ENCODE measurements at regions of chr2 and their contacts with region 1.

Region 1: DNA sequence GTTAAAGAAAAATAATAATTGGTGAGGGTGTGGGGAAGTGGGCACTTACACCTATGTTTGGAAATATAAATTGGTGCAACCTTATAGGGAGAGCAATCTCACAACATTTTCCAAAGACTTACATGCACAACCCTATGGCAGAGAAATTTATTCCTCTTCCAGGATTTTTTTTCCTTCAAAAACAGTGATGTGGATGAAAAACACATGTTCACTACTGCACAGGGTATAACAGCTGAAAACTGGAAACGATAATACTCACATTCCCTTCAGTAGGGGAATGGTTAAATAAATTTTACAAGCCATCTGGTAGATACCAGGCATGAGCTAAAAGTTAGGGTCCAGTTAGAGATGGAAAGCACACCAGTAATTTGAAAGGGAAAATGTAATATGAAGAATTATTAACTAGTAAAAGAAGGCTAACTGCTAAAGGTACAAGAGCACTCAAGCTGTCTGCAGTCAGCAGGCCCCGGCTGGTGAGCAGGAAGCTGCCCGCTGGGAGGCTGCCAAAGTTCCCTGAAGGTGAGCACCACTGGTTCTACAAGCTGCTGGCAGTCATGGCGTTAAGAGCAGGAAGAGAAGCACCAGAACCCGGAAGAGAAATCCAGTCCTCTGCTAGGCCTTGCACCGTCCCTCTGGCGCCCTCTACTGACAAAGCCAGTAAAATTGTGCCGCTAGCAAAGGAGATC is 28.4 kb upstream of the CASP8 start:
- DNase-seq: peak; percentile 77 to 96 (median 92)
- ATAC-seq: peak; percentile 46
- H3K4me3 ChIP-seq: peak overlapping the region in 1 of 2 experiments; percentile 4
- H3K4me3 Mint-ChIP-seq: peak overlapping the region; percentile 58
- H3K27ac ChIP-seq: peak overlapping the region in 1 of 2 experiments; percentile 47
- H3K27ac Mint-ChIP-seq: peak overlapping the region; percentile 89
- H3K4me1 ChIP-seq: peaks cover 40% of the 10 kb centered on the region
- H3K4me1 Mint-ChIP-seq: peaks cover 60% of the 10 kb centered on the region
- H3K27me3 ChIP-seq: no peaks in the 10 kb centered on the region
- H3K27me3 Mint-ChIP-seq: no peaks in the 10 kb centered on the region
- CTCF ChIP-seq: peak; percentile 91

Region 2: DNA sequence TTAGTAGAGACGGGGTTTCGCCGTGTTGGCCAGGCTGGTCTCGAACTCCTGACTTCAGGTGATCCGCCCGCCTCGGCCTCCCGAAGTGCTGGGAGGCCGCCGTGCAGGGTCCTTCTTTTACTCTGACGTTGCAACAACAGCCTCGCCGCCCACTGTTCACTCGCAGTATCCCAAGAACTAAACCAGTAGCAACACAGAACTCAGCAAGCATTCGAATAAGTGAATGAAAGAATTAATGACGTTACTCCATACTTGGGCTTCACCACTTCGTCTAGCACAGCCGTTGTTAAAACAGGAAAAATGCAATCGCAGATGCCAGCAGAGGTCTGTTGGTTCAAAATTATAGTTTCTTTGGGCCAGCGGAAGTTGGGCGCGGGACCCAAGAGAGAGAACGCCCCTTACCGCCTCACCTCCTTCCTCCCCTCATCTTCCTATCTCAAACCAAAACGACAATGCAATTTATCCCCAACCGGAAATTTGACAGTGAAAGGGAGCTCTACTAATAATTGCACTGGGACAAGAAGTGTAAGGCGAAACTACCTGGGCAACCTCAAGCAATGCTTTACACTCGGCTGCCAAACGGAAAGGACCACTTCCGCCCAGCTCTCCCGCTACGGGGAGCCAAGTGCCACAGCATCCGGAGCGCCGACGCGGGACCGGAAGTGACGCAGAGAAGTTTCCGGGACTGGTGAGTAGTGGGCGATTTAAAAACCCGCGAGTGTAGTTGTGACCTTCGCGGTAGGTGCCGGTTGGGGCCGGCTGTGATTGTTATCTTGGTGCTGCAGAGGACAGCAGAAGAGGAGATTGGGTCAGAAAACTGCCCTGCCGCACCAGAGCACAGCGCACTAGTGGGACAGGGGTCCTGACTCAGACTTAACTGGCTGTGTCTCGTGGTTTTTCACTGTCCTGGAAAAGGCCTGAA is 343.0 kb before region 1 on chr2 and contains the starts of genes NIF3L1 and PPIL3:
- CTCF ChIA-PET with region 1: interaction called, 5 read pairs
- POLR2A ChIA-PET with region 1: interaction called, 5 read pairs
- intact Hi-C with region 1: loop called in 1 of 2 experiments (anchors 1 kb)
- DNase-seq: peak; percentile 92 to 99 (median 97)
- ATAC-seq: peak; percentile 70
- H3K4me3 ChIP-seq: peak within 1 kb of the TSS; percentile 77 to 78
- H3K4me3 Mint-ChIP-seq: peak within 1 kb of the TSS; percentile 94
- H3K27ac ChIP-seq: peak within 1 kb of the TSS; percentile 96
- H3K27ac Mint-ChIP-seq: peak within 1 kb of the TSS; percentile 100
- H3K4me1 ChIP-seq: peaks cover 21% of the 10 kb centered on the region
- H3K4me1 Mint-ChIP-seq: peaks cover 55% of the 10 kb centered on the region
- H3K27me3 ChIP-seq: no peaks in the 10 kb centered on the region
- H3K27me3 Mint-ChIP-seq: no peaks in the 10 kb centered on the region
- CTCF ChIP-seq: no peak
- total RNA-seq, gene NIF3L1: 3.8 to 4.9 TPM
- total RNA-seq, gene PPIL3: 48.6 to 51.0 TPM

Region 3: DNA sequence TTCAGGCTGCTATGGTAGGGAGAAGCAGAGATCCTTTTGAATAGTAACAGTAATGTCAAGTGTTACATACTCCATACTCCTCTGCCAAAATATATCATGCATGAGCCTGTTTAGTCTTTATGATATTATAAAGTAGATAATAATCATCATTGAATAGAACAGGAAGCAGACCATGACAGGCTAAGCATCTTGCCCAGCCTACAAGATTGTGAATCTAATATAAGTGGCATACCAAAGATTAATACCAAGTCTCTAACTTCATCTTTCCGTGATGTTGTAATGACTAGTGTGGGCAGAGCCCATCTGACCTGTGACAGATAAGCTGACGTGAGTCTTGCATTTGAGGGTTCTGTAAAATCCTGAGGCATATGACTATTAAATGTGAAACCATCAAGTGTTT is 147.1 kb before region 1 on chr2:
- CTCF ChIA-PET with region 1: no interaction called
- POLR2A ChIA-PET with region 1: no interaction called
- intact Hi-C with region 1: no loop called
- DNase-seq: no peak
- ATAC-seq: no peak
- H3K4me3 ChIP-seq: no peak overlapping the region
- H3K4me3 Mint-ChIP-seq: no peak overlapping the region
- H3K27ac ChIP-seq: no peak overlapping the region
- H3K27ac Mint-ChIP-seq: no peak overlapping the region
- H3K4me1 ChIP-seq: no peaks in the 10 kb centered on the region
- H3K4me1 Mint-ChIP-seq: peaks cover 8% of the 10 kb centered on the region
- H3K27me3 ChIP-seq: no peaks in the 10 kb centered on the region
- H3K27me3 Mint-ChIP-seq: no peaks in the 10 kb centered on the region
- CTCF ChIP-seq: no peak

Region 4: GRCh38 chr2:201118121-201118960 is 113.6 kb before region 1 on chr2:
- CTCF ChIA-PET with region 1: interaction called, 22 read pairs
- POLR2A ChIA-PET with region 1: interaction called, 30 read pairs
- intact Hi-C with region 1: loop called (anchors 2 kb)
- DNase-seq: peak; percentile 77 to 94 (median 89)
- ATAC-seq: peak; percentile 43
- H3K4me3 ChIP-seq: peak overlapping the region; percentile 82 to 95
- H3K4me3 Mint-ChIP-seq: peak overlapping the region; percentile 99
- H3K27ac ChIP-seq: peak overlapping the region; percentile 92
- H3K27ac Mint-ChIP-seq: peak overlapping the region; percentile 100
- H3K4me1 ChIP-seq: peaks cover 47% of the 10 kb centered on the region
- H3K4me1 Mint-ChIP-seq: peaks cover 67% of the 10 kb centered on the region
- H3K27me3 ChIP-seq: no peaks in the 10 kb centered on the region
- H3K27me3 Mint-ChIP-seq: no peaks in the 10 kb centered on the region
- CTCF ChIP-seq: peak; percentile 64

Region 5: GRCh38 chr2:201208563-201209252 is 23.2 kb before region 1 on chr2:
- CTCF ChIA-PET with region 1: interaction called, 30 read pairs
- POLR2A ChIA-PET with region 1: interaction called, 4 read pairs
- intact Hi-C with region 1: loop called in 1 of 2 experiments (anchors 2 kb)
- DNase-seq: peak in 1 of 9 experiments; percentile 41
- ATAC-seq: no peak
- H3K4me3 ChIP-seq: no peak overlapping the region
- H3K4me3 Mint-ChIP-seq: no peak overlapping the region
- H3K27ac ChIP-seq: no peak overlapping the region
- H3K27ac Mint-ChIP-seq: peak overlapping the region; percentile 23
- H3K4me1 ChIP-seq: peaks cover 16% of the 10 kb centered on the region
- H3K4me1 Mint-ChIP-seq: peaks cover 39% of the 10 kb centered on the region
- H3K27me3 ChIP-seq: no peaks in the 10 kb centered on the region
- H3K27me3 Mint-ChIP-seq: no peaks in the 10 kb centered on the region
- CTCF ChIP-seq: no peak

Region 6: DNA sequence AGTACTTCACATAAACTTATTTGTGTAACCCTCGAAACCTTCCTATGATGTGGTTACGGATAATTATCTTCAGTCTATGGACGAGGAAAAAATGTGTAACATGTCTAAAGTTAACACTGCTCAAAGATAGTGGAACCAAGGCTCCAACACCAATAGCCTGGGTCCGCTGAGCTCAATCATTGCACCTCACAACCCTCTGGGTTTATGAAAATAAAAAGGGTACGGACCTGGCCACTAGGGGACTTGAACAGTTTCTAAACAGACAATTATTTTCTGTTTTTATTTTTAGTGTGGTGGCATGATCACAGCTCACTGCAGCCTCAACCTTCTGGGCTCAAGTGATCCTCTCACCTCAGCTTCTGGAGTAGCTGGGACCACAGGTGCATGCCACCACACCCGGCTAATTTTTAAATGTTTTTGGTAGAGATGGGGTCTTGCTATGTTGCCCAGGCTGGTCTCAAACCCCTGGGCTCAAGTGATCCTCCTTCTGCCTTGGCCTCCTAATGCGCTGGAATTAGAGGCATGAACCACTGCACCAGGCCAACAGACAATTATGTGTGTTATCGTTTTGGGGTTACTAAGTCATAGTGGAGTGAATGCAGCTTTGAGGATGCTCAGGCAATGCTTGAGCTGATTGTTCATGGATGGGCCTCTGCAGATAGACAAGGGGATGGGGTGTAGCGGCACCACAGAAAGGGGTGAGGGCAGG is 38.5 kb after region 1 on chr2:
- CTCF ChIA-PET with region 1: interaction called, 76 read pairs
- POLR2A ChIA-PET with region 1: interaction called, 13 read pairs
- intact Hi-C with region 1: loop called in 1 of 2 experiments (anchors 5 kb)
- DNase-seq: no peak
- ATAC-seq: no peak
- H3K4me3 ChIP-seq: no peak overlapping the region
- H3K4me3 Mint-ChIP-seq: no peak overlapping the region
- H3K27ac ChIP-seq: no peak overlapping the region
- H3K27ac Mint-ChIP-seq: peak overlapping the region; percentile 68
- H3K4me1 ChIP-seq: peaks cover 56% of the 10 kb centered on the region
- H3K4me1 Mint-ChIP-seq: peaks cover 73% of the 10 kb centered on the region
- H3K27me3 ChIP-seq: no peaks in the 10 kb centered on the region
- H3K27me3 Mint-ChIP-seq: no peaks in the 10 kb centered on the region
- CTCF ChIP-seq: no peak

Region 7: DNA sequence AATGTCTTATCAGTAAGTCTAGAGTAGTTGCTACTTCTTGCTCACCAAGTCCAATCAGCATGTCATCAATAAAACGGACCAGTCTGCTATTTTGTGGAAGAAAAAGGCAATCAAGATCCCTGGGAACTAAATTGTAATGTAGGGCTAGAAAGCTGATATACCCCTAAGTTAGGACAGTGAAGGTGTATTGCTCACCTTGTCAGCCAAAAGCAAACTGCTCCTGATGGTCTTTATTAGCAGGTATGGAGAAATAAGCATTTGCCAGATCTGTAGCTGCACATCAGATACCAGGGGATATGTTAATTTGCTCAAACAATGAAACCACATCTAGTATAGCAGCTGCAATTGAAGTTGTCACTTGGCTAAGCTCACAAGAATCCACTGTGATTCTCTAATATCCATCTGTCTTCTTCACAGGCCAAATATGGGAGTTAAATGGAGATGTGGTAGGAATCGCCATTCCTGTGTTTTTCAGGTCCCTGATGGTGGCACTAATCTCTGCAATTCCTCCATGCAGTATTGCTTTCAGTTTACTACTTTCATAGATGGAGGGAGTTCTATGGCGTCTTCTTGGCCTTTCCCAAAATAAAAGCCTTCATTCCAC is 336.4 kb after region 1 on chr2:
- CTCF ChIA-PET with region 1: no interaction called
- POLR2A ChIA-PET with region 1: no interaction called
- intact Hi-C with region 1: no loop called
- DNase-seq: no peak
- ATAC-seq: no peak
- H3K4me3 ChIP-seq: no peak overlapping the region
- H3K4me3 Mint-ChIP-seq: no peak overlapping the region
- H3K27ac ChIP-seq: no peak overlapping the region
- H3K27ac Mint-ChIP-seq: no peak overlapping the region
- H3K4me1 ChIP-seq: no peaks in the 10 kb centered on the region
- H3K4me1 Mint-ChIP-seq: peaks cover 4% of the 10 kb centered on the region
- H3K27me3 ChIP-seq: no peaks in the 10 kb centered on the region
- H3K27me3 Mint-ChIP-seq: no peaks in the 10 kb centered on the region
- CTCF ChIP-seq: no peak

Region 8: DNA sequence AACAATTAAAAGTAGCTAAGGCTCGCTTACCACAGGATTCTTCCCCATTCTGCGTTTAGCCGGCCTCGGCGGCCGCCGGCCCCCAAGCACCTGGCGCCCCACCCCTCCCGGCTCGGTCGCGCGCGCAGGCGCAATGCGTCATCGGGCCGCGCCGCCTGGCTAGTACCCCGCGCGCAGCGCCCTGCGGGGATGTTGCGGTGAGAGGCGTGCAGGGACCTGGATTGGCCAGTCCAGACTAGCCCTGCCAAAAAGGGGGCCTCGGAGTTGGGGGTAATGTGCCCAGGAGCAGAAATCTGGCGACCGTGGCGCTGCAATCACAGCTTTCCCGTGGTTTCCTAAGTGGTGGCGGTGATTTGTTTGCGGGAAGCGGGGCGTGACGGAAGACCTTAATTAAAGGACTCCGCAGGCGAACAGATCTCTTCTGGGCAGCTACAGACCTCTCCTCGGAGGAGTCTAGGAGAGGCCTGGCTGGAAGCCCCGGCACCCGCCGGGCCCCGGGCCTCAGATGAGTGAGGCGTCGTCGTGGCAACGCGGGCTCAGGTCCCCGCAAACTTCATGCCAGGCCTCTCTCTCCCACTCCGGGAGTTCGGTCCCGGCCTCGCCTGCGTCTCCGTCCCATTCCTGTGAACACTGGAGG is 410.8 kb after region 1 on chr2:
- CTCF ChIA-PET with region 1: interaction called, 4 read pairs
- POLR2A ChIA-PET with region 1: no interaction called
- intact Hi-C with region 1: loop called (anchors 2 to 5 kb)
- DNase-seq: peak; percentile 65 to 91 (median 83)
- ATAC-seq: peak; percentile 86
- H3K4me3 ChIP-seq: peak overlapping the region; percentile 98 to 99
- H3K4me3 Mint-ChIP-seq: peak overlapping the region; percentile 90
- H3K27ac ChIP-seq: peak overlapping the region; percentile 89 to 99
- H3K27ac Mint-ChIP-seq: peak overlapping the region; percentile 96
- H3K4me1 ChIP-seq: no peaks in the 10 kb centered on the region
- H3K4me1 Mint-ChIP-seq: peaks cover 14% of the 10 kb centered on the region
- H3K27me3 ChIP-seq: no peaks in the 10 kb centered on the region
- H3K27me3 Mint-ChIP-seq: no peaks in the 10 kb centered on the region
- CTCF ChIP-seq: no peak